Psoas muscle (tissue), 8 donors: ENCODE measurements at regions of chrX and their contacts with region 1.

Region 1: DNA sequence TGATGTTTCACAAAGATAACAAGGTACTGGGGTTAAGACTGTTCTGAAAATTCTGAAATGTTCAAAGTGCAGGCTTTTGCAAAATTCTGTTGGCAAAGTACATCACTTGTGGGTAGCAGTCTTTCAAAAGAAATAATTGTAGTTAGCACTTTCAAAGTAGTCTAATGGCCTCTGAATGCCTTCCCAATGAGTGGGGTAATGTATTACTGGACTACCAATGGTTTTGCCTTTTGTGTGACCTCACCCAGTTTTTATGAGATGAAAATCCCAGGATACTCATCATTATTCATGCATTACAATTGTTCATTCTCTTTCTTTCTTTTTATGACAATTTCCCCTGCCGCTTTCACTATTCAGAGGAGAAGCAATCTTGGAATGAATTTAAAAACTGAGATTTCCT is 686.1 kb downstream of the GLUD2 start:
- DNase-seq: no peak
- ATAC-seq: no peak
- H3K4me3 ChIP-seq: no peak overlapping the region
- H3K27ac ChIP-seq: no peak overlapping the region
- H3K4me1 ChIP-seq: no peaks in the 10 kb centered on the region
- H3K27me3 ChIP-seq: no peaks in the 10 kb centered on the region
- CTCF ChIP-seq: no peak

Region 2: DNA sequence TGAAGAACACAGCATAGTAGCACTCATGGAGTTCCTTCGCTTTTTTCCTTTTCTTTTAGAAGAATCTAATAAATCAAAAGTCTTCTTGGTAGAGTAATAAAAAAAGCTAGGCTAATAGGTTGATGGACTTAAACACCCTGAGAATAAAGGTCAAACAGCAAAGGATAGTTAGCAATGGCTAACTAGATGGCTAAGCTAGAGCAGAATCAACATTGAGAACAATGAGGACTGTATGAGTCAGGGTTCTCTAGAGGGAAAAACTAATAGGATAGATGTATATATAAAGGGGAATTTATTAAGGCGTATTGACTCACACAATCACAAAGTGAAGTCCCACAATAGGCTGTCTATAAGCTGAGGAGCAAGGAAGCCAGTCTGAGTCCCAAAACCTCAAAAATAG is 135.2 kb before region 1 on chrX:
- intact Hi-C with region 1: no loop called
- DNase-seq: no peak
- ATAC-seq: no peak
- H3K4me3 ChIP-seq: no peak overlapping the region
- H3K27ac ChIP-seq: no peak overlapping the region
- H3K4me1 ChIP-seq: no peaks in the 10 kb centered on the region
- H3K27me3 ChIP-seq: no peaks in the 10 kb centered on the region
- CTCF ChIP-seq: no peak

Region 3: GRCh38 chrX:121802881-121803412 is 69.4 kb after region 1 on chrX:
- intact Hi-C with region 1: no loop called
- DNase-seq: no peak
- ATAC-seq: no peak
- H3K4me3 ChIP-seq: no peak overlapping the region
- H3K27ac ChIP-seq: no peak overlapping the region
- H3K4me1 ChIP-seq: no peaks in the 10 kb centered on the region
- H3K27me3 ChIP-seq: no peaks in the 10 kb centered on the region
- CTCF ChIP-seq: no peak

Region 4: GRCh38 chrX:122625821-122626220 is 892.3 kb after region 1 on chrX:
- intact Hi-C with region 1: loop called in 1 of 2 experiments (anchors 10 kb)
- DNase-seq: no peak
- ATAC-seq: no peak
- H3K4me3 ChIP-seq: no peak overlapping the region
- H3K27ac ChIP-seq: no peak overlapping the region
- H3K4me1 ChIP-seq: no peaks in the 10 kb centered on the region
- H3K27me3 ChIP-seq: no peaks in the 10 kb centered on the region
- CTCF ChIP-seq: no peak